A549 (cell line): ENCODE measurements at regions of chr17 and their contacts with region 1.

Region 1: DNA sequence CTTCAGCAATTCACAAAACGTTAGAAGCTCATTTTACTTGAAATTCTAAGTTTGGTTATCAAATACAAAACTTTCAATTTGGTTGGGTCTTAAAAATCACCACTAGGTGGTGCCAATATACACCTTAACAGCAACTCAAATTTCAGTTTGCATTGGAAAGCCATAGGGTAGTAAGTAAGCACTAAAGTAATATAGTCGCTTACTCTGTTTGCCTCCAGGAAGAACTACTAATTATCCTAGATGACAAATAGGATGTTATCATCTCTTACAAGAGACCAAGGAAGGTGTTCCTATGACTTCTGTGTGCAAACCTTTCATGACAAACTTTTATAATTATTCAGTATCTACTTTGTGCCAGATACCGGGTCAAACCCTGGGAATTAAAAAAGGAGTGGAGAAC is 93.3 kb downstream of the MYO1D start:
- DNase-seq: peak; percentile 61 to 69
- ATAC-seq: peak; percentile 70 to 77; a peak in 5 of 6 replicates
- H3K4me3 ChIP-seq: no peak overlapping the region
- H3K27ac ChIP-seq: no peak overlapping the region
- H3K4me1 ChIP-seq: no peaks in the 10 kb centered on the region
- CTCF ChIP-seq: peak; percentile 95
- EP300 ChIP-seq: no peak
- POLR2A ChIP-seq: no peak
- RAD21 ChIP-seq: peak; percentile 89 to 92

Region 2: GRCh38 chr17:32746698-32747097 is 36.9 kb before region 1 on chr17:
- CTCF ChIA-PET with region 1: no interaction called
- POLR2A ChIA-PET with region 1: no interaction called
- DNase-seq: no peak
- ATAC-seq: no peak
- H3K4me3 ChIP-seq: no peak overlapping the region
- H3K27ac ChIP-seq: no peak overlapping the region
- H3K4me1 ChIP-seq: peaks cover 13% of the 10 kb centered on the region; the same call in 1 of the 3 replicates
- CTCF ChIP-seq: no peak
- EP300 ChIP-seq: no peak
- POLR2A ChIP-seq: no peak
- RAD21 ChIP-seq: no peak

Region 3: DNA sequence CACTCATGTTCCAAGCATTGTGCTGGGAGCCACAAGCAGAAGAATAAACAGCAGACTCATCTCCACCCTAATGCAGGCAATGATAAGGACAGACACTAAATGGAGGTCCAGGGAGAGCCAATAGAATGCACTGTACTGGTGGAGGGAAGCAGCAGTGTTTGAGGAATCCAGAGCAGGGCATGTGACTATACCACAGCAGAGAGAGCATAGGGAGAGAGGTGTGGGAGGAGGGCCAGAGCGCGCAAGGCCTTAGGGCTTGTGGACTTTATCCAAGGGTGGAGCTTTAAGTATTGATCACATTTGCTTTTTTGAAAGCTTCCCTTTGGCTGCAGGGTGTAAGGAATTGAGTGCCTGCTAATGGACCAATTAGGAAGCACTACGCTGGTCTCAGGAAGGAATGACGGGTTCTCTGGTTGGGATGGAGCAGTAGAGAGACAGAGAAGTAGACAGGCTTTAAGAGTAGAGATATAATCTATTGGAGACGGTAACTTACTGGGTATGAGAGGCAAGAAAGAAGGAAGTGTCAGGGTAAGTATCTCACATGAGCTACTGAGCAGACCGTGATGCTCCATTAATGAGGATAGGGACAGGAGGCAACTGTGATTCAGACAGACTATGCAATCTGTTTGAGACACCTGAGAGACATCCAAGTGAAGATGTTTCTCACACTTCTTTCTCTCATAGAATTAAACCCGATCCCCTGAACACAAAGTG is 11.1 kb after region 1 on chr17:
- CTCF ChIA-PET with region 1: interaction called, 61 read pairs
- POLR2A ChIA-PET with region 1: no interaction called
- DNase-seq: no peak
- ATAC-seq: peak; percentile 39 to 43; a peak in 2 of 6 replicates
- H3K4me3 ChIP-seq: no peak overlapping the region
- H3K27ac ChIP-seq: no peak overlapping the region
- H3K4me1 ChIP-seq: no peaks in the 10 kb centered on the region
- CTCF ChIP-seq: no peak
- EP300 ChIP-seq: no peak
- POLR2A ChIP-seq: no peak
- RAD21 ChIP-seq: no peak

Region 4: DNA sequence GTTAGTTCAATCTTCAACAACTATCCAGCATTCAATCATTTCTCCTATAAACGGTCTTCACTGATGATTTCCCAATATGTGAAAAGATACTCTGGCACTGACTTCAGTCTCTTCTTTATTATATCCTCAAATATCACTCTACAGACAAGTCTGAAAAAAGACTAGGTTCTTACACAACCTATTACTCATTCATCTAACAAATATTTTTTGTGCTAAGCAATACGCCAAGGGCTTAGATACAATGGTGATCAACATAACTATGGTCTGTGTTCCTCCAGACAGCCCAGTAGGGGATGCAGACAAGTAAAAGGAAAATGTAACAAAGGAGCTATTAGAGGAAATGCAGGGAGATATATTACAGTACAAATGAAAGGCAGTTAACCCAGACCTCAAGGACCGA is 29.4 kb after region 1 on chr17:
- CTCF ChIA-PET with region 1: interaction called, 10 read pairs
- POLR2A ChIA-PET with region 1: no interaction called
- DNase-seq: no peak
- ATAC-seq: peak in 1 of 2 experiments; percentile 46; a peak in 2 of 6 replicates
- H3K4me3 ChIP-seq: no peak overlapping the region
- H3K27ac ChIP-seq: no peak overlapping the region
- H3K4me1 ChIP-seq: no peaks in the 10 kb centered on the region
- CTCF ChIP-seq: no peak
- EP300 ChIP-seq: no peak
- POLR2A ChIP-seq: no peak
- RAD21 ChIP-seq: no peak

Region 5: DNA sequence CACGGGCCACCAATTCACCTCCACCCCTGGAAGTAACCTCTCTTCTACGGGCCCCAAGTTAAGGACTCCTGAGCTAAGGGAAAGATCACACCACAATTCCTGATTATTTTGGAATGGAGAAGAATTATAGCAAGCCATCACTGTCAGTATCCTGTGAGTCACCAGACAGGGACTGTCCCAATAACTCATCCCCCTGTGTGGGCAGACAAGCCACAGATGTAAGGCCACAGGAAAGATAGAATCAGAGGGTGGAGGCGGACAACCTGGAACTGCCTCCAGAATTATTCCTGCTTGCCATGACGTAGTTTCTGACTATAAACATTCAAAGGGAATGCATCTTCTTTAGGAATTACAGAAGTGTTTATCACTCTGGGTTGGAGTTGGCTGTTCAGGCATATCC is 99.1 kb after region 1 on chr17:
- CTCF ChIA-PET with region 1: interaction called, 205 read pairs
- POLR2A ChIA-PET with region 1: interaction called, 11 read pairs
- DNase-seq: no peak
- ATAC-seq: no peak
- H3K4me3 ChIP-seq: no peak overlapping the region
- H3K27ac ChIP-seq: no peak overlapping the region
- H3K4me1 ChIP-seq: 0 out of 3 replicates have a peak, but pooled peaks cover under 1% of the 10 kb centered on the region
- CTCF ChIP-seq: no peak
- EP300 ChIP-seq: no peak
- POLR2A ChIP-seq: no peak
- RAD21 ChIP-seq: no peak

Region 6: GRCh38 chr17:32909787-32910369 is 126.3 kb after region 1 on chr17:
- CTCF ChIA-PET with region 1: interaction called, 32 read pairs
- POLR2A ChIA-PET with region 1: no interaction called
- DNase-seq: peak; percentile 83 to 86
- ATAC-seq: peak; percentile 81 to 89
- H3K4me3 ChIP-seq: no peak overlapping the region
- H3K27ac ChIP-seq: peak overlapping the region in 1 of 2 experiments; percentile 39; a peak in 1 of 6 replicates
- H3K4me1 ChIP-seq: peaks cover 7% of the 10 kb centered on the region
- CTCF ChIP-seq: peak; percentile 67
- EP300 ChIP-seq: no peak
- POLR2A ChIP-seq: no peak
- RAD21 ChIP-seq: peak; percentile 57 to 66

Region 7: DNA sequence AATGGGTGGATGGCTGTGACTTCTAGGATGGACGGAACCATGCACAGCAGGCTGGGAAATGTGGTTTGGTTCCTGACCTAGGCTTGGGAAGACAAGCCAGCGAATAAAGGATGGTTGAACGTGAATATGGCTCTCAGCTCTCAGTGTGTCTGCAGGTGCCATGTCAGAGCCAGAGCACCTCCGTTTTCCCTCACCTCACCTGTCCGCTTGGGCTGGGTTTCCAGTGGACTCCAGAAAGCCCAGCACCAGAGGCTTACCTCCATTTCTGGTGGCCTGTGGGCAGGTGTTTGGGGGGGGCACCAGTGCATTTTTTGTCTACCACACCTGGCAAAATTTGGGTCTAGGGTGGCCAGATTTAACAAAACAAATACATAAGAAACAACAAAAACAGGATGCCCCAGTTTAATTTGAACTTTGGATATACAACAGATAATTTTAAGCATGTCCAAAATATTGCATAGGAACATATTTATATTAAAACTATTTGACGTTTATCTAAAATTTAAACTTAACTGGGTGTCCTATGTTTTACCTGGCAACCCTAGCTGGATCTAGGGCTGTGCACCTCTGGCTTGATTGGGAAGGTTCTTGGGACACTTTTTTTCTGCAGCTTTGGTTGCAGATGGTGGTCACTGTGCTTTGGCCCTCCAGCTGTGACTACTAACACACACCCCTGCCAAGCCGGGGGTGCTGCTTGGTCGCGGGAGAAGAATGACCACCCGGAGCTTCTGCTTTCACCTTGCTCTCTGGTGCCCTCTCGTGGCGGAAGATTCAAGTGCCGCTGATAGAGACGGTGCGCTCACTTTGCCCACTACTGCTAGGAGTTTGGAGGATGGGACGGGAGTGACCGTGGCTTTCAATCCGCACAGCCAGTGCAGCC is 214.4 kb after region 1 on chr17:
- CTCF ChIA-PET with region 1: interaction called, 15 read pairs
- POLR2A ChIA-PET with region 1: no interaction called
- DNase-seq: peak; percentile 69 to 79
- ATAC-seq: peak; percentile 88 to 94
- H3K4me3 ChIP-seq: peak overlapping the region; percentile 28
- H3K27ac ChIP-seq: peak overlapping the region; percentile 54 to 72; a peak in 5 of 6 replicates
- H3K4me1 ChIP-seq: peaks cover 8% of the 10 kb centered on the region; the same call in 2 of the 3 replicates
- CTCF ChIP-seq: peak; percentile 92
- EP300 ChIP-seq: no peak
- POLR2A ChIP-seq: no peak
- RAD21 ChIP-seq: peak; percentile 66 to 71